ENCODE measurements at regions of chr11 and their contacts with region 1.

Region 1: GRCh38 chr11:114794048-114794684 is 115.8 kb downstream of the NXPE2 start:
- DNase-seq: no peak
- H3K4me3 ChIP-seq: no peak overlapping the region
- H3K4me3 Mint-ChIP-seq: no peak overlapping the region
- H3K27ac Mint-ChIP-seq: no peak overlapping the region
- H3K4me1 ChIP-seq: no peaks in the 10 kb centered on the region
- H3K4me1 Mint-ChIP-seq: peaks cover 4% of the 10 kb centered on the region
- H3K27me3 ChIP-seq: no peaks in the 10 kb centered on the region
- H3K27me3 Mint-ChIP-seq: peaks cover 9% of the 10 kb centered on the region
- CTCF ChIP-seq: no peak

Region 2: DNA sequence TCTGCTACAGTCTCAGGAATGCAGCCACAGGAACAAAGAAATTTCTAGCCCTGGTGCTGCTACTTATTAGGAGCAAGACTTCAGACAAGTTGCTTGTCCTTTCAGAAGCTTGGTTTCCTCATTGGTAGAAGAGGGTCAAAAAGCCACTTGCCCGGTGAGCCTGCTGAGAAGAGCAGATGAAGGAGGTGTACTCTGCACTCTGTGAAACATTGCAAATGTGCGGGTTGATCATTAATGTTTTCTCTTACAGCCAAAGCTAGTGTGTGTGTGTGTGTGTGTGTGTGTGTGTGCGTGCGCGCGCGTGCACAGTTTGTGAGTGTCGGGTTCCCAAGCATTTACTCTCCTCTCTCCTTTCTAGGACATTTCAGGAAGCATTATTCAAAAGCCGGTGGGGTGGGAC is 584.3 kb before region 1 on chr11:
- CTCF ChIA-PET with region 1: no interaction called
- POLR2A ChIA-PET with region 1: no interaction called
- intact Hi-C with region 1: loop called (anchors 5 kb)
- DNase-seq: peak; percentile 90 to 93
- H3K4me3 ChIP-seq: 0 out of 2 replicates have a peak overlapping the region, but pooled peaks have one; percentile 9
- H3K4me3 Mint-ChIP-seq: peak overlapping the region; percentile 68
- H3K27ac Mint-ChIP-seq: peak overlapping the region; percentile 71
- H3K4me1 ChIP-seq: peaks cover 53% of the 10 kb centered on the region
- H3K4me1 Mint-ChIP-seq: peaks cover 34% of the 10 kb centered on the region
- H3K27me3 ChIP-seq: no peaks in the 10 kb centered on the region
- H3K27me3 Mint-ChIP-seq: no peaks in the 10 kb centered on the region
- CTCF ChIP-seq: no peak

Region 3: GRCh38 chr11:114399490-114400216 is 394.5 kb before region 1 on chr11:
- CTCF ChIA-PET with region 1: no interaction called
- POLR2A ChIA-PET with region 1: no interaction called
- intact Hi-C with region 1: no loop called
- DNase-seq: peak in 1 of 2 experiments; percentile 15
- H3K4me3 ChIP-seq: peak overlapping the region; percentile 51
- H3K4me3 Mint-ChIP-seq: peak overlapping the region; percentile 91
- H3K27ac Mint-ChIP-seq: peak overlapping the region; percentile 99
- H3K4me1 ChIP-seq: peaks cover 16% of the 10 kb centered on the region
- H3K4me1 Mint-ChIP-seq: peaks cover 36% of the 10 kb centered on the region
- H3K27me3 ChIP-seq: no peaks in the 10 kb centered on the region
- H3K27me3 Mint-ChIP-seq: no peaks in the 10 kb centered on the region
- CTCF ChIP-seq: no peak

Region 4: GRCh38 chr11:114738954-114739353 is 55.2 kb before region 1 on chr11:
- CTCF ChIA-PET with region 1: no interaction called
- POLR2A ChIA-PET with region 1: no interaction called
- intact Hi-C with region 1: no loop called
- DNase-seq: peak; percentile 63 to 67
- H3K4me3 ChIP-seq: no peak overlapping the region
- H3K4me3 Mint-ChIP-seq: no peak overlapping the region
- H3K27ac Mint-ChIP-seq: no peak overlapping the region
- H3K4me1 ChIP-seq: no peaks in the 10 kb centered on the region
- H3K4me1 Mint-ChIP-seq: no peaks in the 10 kb centered on the region
- H3K27me3 ChIP-seq: no peaks in the 10 kb centered on the region
- H3K27me3 Mint-ChIP-seq: peaks cover 13% of the 10 kb centered on the region
- CTCF ChIP-seq: peak; percentile 90 to 97

Region 5: DNA sequence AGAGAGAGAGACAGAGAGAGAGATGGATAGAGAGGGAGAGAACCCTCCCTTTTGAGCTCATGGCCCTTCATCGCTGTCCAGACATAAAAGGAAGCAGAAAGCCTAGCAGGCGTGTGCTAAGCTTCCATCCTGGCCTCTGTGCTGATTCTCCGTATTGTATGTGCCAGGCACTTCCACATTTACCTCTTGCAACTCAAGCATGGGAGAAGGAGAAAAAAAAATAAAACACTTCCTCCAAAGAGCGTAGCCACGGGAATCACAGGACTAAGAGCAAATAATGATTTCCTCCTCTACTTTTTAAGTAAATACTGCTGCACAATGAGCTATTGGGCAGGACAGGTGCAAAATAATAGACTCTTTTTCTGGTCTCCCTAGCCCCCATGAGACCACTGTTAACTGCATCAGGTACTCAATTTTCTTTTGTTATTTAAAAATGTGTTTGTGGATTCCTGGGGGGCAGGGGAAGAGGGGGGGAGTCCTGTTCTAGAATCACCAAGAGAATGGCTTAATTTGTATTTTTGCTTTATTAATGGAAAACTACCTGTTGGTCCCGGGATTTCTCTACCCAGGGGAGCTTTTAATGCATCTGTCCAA is 38.5 kb after region 1 on chr11:
- CTCF ChIA-PET with region 1: no interaction called
- POLR2A ChIA-PET with region 1: no interaction called
- intact Hi-C with region 1: no loop called
- DNase-seq: no peak
- H3K4me3 ChIP-seq: no peak overlapping the region
- H3K4me3 Mint-ChIP-seq: no peak overlapping the region
- H3K27ac Mint-ChIP-seq: no peak overlapping the region
- H3K4me1 ChIP-seq: no peaks in the 10 kb centered on the region
- H3K4me1 Mint-ChIP-seq: no peaks in the 10 kb centered on the region
- H3K27me3 ChIP-seq: no peaks in the 10 kb centered on the region; the same call in 1 of the 2 replicates
- H3K27me3 Mint-ChIP-seq: no peaks in the 10 kb centered on the region
- CTCF ChIP-seq: no peak